ENCODE measurements at regions of chr1 and their contacts with region 1.

Region 1: DNA sequence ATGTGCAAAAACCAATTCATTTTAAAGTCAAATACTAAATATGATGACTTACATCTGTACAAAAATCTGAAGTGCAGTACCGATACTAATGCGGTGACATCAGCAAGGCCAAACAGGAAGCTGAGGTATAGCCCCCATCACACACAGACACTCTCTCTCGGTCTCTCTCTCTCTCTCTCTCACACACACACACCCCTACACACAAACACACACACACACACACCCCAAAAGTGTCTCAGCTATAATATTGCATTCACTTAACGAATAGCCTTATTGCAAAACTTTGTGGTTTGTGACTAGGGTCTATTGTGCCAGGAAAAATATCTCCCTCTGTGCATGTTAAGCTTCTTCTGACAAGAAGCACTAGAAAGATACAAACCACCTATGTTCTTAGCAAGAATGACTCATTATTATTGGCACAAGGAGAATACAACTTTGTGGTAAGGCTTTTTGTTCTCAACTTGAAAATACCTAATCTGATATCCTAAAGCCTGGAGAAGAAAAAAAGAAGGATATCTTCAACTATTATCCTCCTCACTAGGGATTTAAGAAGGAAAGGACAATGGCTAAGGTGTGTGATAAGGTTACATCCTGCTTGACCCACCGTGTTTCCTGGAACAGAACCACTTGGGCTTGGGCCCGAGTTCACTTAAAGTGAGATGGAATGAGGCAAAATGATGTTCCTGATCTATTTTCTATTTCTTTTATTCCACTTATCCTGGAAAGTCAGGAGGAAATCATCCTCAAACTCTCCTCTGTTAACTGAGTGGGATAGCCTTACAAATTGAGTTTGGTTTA is 107.1 kb downstream of the NIBAN1 start:
- DNase-seq: peak; percentile 79
- ATAC-seq: peak; percentile 94
- H3K4me3 ChIP-seq: 0 out of 2 replicates have a peak overlapping the region, but pooled peaks have one; percentile 11
- H3K27ac ChIP-seq: peak overlapping the region; percentile 87
- H3K4me1 ChIP-seq: peaks cover 30% of the 10 kb centered on the region
- H3K27me3 ChIP-seq: no peaks in the 10 kb centered on the region
- CTCF ChIP-seq: no peak
- EP300 ChIP-seq: peak; percentile 84 to 87
- POLR2A ChIP-seq: no peak
- RAD21 ChIP-seq: no peak

Region 2: DNA sequence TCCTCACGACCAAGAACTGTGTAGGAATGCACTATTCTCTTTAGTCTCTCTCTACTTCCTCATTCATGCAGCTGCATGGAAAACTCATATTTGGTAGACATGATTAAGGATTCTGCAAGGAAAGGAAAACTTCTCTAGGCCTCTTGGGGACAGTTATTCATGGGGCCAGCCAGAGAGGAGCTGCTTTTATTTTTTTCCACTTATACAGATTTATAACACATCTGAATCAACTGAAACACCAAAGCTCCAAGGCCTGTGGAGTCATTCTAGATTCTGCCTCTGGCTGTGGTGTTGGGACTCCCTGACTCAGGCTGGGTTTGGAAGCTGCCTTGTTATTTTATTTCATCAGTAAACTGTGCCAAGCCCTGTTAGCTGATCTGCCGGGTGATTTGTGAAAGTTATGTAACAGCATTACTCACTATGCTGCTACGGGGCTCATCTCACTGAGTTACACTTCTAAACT is 28.7 kb before region 1 on chr1:
- CTCF ChIA-PET with region 1: interaction called, 4 read pairs
- POLR2A ChIA-PET with region 1: interaction called, 3 read pairs
- RAD21 ChIA-PET with region 1: interaction called, 3 read pairs
- SMC1A ChIA-PET with region 1: interaction called, 12 read pairs
- in situ Hi-C with region 1: no loop called
- intact Hi-C with region 1: no loop called
- DNase-seq: no peak
- ATAC-seq: no peak
- H3K4me3 ChIP-seq: no peak overlapping the region
- H3K27ac ChIP-seq: no peak overlapping the region
- H3K4me1 ChIP-seq: peaks cover 7% of the 10 kb centered on the region
- H3K27me3 ChIP-seq: no peaks in the 10 kb centered on the region
- CTCF ChIP-seq: no peak
- EP300 ChIP-seq: no peak
- POLR2A ChIP-seq: no peak
- RAD21 ChIP-seq: no peak

Region 3: GRCh38 chr1:184881941-184882913 is 15.0 kb after region 1 on chr1:
- CTCF ChIA-PET with region 1: interaction called, 5 read pairs
- POLR2A ChIA-PET with region 1: no interaction called
- RAD21 ChIA-PET with region 1: interaction called, 4 read pairs
- SMC1A ChIA-PET with region 1: interaction called, 6 read pairs
- in situ Hi-C with region 1: no loop called
- intact Hi-C with region 1: loop called (anchors 1 kb)
- DNase-seq: no peak
- ATAC-seq: peak; percentile 82
- H3K4me3 ChIP-seq: no peak overlapping the region
- H3K27ac ChIP-seq: peak overlapping the region; percentile 66
- H3K4me1 ChIP-seq: peaks cover 18% of the 10 kb centered on the region
- H3K27me3 ChIP-seq: no peaks in the 10 kb centered on the region
- CTCF ChIP-seq: no peak
- EP300 ChIP-seq: peak; percentile 48 to 52; a peak in 2 of 4 replicates
- POLR2A ChIP-seq: no peak
- RAD21 ChIP-seq: no peak

Region 4: DNA sequence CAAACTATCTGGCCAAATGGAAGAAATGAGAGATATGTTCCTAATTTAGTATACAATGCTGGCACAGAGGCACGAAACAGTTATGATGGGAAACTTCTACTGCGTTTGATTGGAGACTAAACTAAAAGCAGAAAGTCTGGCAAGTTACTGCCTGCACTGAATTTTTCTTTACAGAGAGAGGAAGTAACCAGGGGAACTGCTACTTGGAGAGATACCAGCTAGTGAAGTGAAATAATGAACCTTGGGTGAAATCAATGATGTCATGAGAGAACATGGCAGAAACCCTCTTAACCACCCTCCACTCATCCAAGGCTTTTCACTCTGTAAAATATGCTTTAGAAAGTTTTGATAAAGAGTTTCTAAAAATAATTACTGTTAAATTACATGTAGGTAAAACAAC is 77.8 kb after region 1 on chr1:
- CTCF ChIA-PET with region 1: no interaction called
- POLR2A ChIA-PET with region 1: no interaction called
- RAD21 ChIA-PET with region 1: interaction called, 10 read pairs
- SMC1A ChIA-PET with region 1: interaction called, 3 read pairs
- in situ Hi-C with region 1: no loop called
- intact Hi-C with region 1: loop called (anchors 5 kb)
- DNase-seq: peak; percentile 51
- ATAC-seq: peak; percentile 87
- H3K4me3 ChIP-seq: no peak overlapping the region
- H3K27ac ChIP-seq: peak overlapping the region; percentile 46
- H3K4me1 ChIP-seq: peaks cover 28% of the 10 kb centered on the region
- H3K27me3 ChIP-seq: no peaks in the 10 kb centered on the region
- CTCF ChIP-seq: no peak
- EP300 ChIP-seq: 0 out of 4 replicates have a peak, but pooled peaks of 1 of the 2 experiments have one; percentile 10
- POLR2A ChIP-seq: no peak
- RAD21 ChIP-seq: no peak

Region 5: GRCh38 chr1:185439727-185440415 is 572.7 kb after region 1 on chr1:
- CTCF ChIA-PET with region 1: no interaction called
- POLR2A ChIA-PET with region 1: no interaction called
- RAD21 ChIA-PET with region 1: no interaction called
- SMC1A ChIA-PET with region 1: no interaction called
- in situ Hi-C with region 1: no loop called
- intact Hi-C with region 1: no loop called
- DNase-seq: peak; percentile 20
- ATAC-seq: peak; percentile 85
- H3K4me3 ChIP-seq: no peak overlapping the region
- H3K27ac ChIP-seq: no peak overlapping the region
- H3K4me1 ChIP-seq: no peaks in the 10 kb centered on the region
- H3K27me3 ChIP-seq: no peaks in the 10 kb centered on the region
- CTCF ChIP-seq: no peak
- EP300 ChIP-seq: peak; percentile 15 to 34; a peak in 1 of 4 replicates
- POLR2A ChIP-seq: no peak
- RAD21 ChIP-seq: no peak

Measured in GM12878 (cell line).